ENCODE measurements at regions of chr10 and their contacts with region 1.

Region 1: DNA sequence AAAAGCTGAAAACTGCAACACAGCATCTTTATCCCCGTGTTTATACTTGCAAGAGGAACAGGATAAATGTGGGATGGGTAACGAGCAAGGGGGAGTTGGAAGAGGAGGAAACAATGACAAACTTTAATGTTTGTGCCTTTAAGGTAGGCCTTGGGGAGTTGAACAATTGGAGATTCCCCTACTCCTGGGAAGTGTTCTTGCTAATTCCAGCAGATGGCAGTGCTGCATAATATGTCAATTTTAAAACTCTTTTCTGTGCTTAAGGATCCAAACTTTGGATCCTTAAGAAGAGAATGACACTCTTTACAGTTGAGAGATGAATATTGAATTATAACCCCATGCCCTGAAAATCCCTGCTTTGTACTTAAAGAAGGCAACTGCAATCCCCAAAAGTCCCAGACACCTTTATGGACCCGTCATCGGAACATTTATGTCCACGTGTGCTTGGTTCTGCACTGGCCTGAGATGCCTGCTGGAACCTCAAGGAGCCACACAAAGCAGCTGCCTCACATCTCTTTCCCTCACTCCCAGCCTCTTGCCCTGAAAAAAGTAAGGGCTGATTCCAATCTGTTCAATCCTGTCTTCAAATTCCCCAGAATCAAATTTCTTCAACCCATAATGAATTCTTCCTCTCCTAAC is 12.0 kb downstream of the IFIT5 start:
- DNase-seq: peak; percentile 56
- H3K4me3 ChIP-seq: no peak overlapping the region
- H3K27ac ChIP-seq: no peak overlapping the region
- H3K4me1 ChIP-seq: no peaks in the 10 kb centered on the region
- H3K27me3 ChIP-seq: no peaks in the 10 kb centered on the region
- CTCF ChIP-seq: peak; percentile 58
- POLR2A ChIP-seq: no peak

Region 2: DNA sequence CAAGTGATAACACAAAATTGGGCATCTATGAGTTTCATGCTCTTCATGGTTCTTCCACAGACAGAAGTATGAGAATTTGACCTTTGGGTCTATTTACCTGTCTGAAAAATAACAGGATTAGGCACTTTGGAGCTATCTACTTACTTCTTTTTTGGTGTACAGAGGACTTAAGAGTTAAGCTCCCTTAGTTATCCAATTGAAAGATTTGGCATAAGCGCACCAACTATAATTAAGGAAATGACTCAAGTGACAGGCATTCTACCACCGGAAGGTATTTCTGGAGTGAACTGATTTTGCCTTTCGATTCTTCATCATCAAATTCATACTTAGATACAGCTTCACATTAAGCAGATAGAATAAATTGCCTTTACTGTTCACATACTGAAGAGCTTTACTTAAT is 31.9 kb after region 1 on chr10:
- CTCF ChIA-PET with region 1: no interaction called
- POLR2A ChIA-PET with region 1: no interaction called
- dilution Hi-C with region 1: no loop called
- intact Hi-C with region 1: loop called (anchors 1 kb)
- DNase-seq: peak; percentile 80
- H3K4me3 ChIP-seq: peak overlapping the region in 1 of 3 experiments; percentile 37
- H3K27ac ChIP-seq: peak overlapping the region; percentile 40
- H3K4me1 ChIP-seq: peaks cover 17% of the 10 kb centered on the region
- H3K27me3 ChIP-seq: no peaks in the 10 kb centered on the region
- CTCF ChIP-seq: no peak
- POLR2A ChIP-seq: no peak